ENCODE measurements at regions of chr16 and their contacts with region 1.

Region 1: DNA sequence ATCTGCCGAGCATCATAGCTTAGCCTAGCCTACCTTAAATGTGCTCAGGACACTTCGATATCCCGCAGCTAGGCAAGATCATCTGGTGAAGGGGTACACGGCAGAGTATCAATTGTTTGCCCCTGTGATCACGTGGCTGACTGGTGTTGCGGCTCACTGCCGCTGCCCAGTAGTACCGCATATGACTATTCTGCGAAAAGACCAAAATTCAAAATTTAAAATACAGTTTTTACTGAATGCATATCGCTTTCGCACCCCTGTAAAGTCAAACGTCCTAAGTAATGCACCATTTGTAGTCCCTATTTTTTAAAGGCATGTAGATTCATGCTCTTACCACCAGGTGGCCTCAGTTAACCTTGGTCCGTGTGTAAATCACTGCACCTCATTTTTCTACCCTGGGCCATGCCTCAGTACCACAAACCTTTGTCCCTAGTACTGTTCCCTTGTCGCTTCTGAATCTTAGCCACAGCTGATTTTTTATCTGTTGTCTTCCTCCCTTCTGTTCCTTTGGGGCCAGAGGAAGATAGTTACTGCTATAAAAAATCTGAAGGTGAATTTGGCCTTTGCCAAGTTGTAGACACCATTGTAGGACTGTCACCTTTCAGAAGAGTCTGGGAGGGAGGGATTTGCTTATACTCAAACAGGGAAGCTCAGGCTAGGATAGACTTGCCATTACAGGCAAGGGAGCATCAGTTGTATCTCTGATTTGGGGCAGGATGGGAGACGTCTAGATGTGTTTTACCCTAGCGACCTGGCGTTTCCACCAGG is 34.4 kb downstream of the WWP2 start:
- DNase-seq: peak; percentile 30
- ATAC-seq: peak; percentile 86
- H3K4me3 Mint-ChIP-seq: no peak overlapping the region
- H3K27ac Mint-ChIP-seq: no peak overlapping the region
- H3K4me1 Mint-ChIP-seq: no peaks in the 10 kb centered on the region
- H3K27me3 Mint-ChIP-seq: no peaks in the 10 kb centered on the region

Region 2: GRCh38 chr16:69812688-69813014 is 16.1 kb after region 1 on chr16:
- CTCF ChIA-PET with region 1: interaction called, 11 read pairs
- POLR2A ChIA-PET with region 1: no interaction called
- intact Hi-C with region 1: no loop called
- DNase-seq: no peak
- ATAC-seq: no peak
- H3K4me3 Mint-ChIP-seq: no peak overlapping the region
- H3K27ac Mint-ChIP-seq: no peak overlapping the region
- H3K4me1 Mint-ChIP-seq: no peaks in the 10 kb centered on the region
- H3K27me3 Mint-ChIP-seq: no peaks in the 10 kb centered on the region

Region 3: GRCh38 chr16:69859105-69859989 is 62.8 kb after region 1 on chr16:
- CTCF ChIA-PET with region 1: no interaction called
- POLR2A ChIA-PET with region 1: no interaction called
- intact Hi-C with region 1: loop called in 1 of 2 experiments (anchors 2 kb)
- DNase-seq: peak; percentile 32
- ATAC-seq: peak; percentile 30
- H3K4me3 Mint-ChIP-seq: no peak overlapping the region
- H3K27ac Mint-ChIP-seq: no peak overlapping the region
- H3K4me1 Mint-ChIP-seq: no peaks in the 10 kb centered on the region
- H3K27me3 Mint-ChIP-seq: no peaks in the 10 kb centered on the region

Region 4: GRCh38 chr16:69930117-69930776 is 133.7 kb after region 1 on chr16:
- CTCF ChIA-PET with region 1: interaction called, 29 read pairs
- POLR2A ChIA-PET with region 1: no interaction called
- intact Hi-C with region 1: loop called (anchors 1 kb)
- DNase-seq: peak; percentile 61
- ATAC-seq: peak; percentile 83
- H3K4me3 Mint-ChIP-seq: no peak overlapping the region
- H3K27ac Mint-ChIP-seq: no peak overlapping the region
- H3K4me1 Mint-ChIP-seq: no peaks in the 10 kb centered on the region
- H3K27me3 Mint-ChIP-seq: no peaks in the 10 kb centered on the region